ENCODE measurements at regions of chr6 and their contacts with region 1.

Region 1: DNA sequence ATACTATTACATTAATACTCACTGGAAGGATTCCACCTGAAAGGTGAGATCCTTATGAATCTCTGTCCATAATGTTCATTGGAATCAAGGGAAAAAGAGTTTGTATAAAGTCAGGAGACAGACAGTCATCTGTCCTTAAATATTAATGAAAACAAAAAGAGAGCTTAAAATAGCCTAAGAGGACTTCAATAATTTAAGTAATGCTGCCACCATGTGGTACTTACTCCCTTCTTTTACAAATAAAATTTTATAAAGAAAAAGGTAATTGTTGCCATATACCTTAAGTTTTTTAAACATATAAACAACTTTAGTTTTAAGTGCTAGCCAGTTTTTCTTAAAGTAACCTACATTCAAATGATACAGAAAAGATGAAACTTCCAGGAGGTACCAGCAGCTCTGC is 5.1 kb downstream of the BLOC1S5 start:
- DNase-seq: no peak
- H3K4me3 Mint-ChIP-seq: no peak overlapping the region
- H3K27ac Mint-ChIP-seq: no peak overlapping the region
- H3K4me1 Mint-ChIP-seq: peaks cover 8% of the 10 kb centered on the region
- H3K27me3 Mint-ChIP-seq: no peaks in the 10 kb centered on the region

Region 2: DNA sequence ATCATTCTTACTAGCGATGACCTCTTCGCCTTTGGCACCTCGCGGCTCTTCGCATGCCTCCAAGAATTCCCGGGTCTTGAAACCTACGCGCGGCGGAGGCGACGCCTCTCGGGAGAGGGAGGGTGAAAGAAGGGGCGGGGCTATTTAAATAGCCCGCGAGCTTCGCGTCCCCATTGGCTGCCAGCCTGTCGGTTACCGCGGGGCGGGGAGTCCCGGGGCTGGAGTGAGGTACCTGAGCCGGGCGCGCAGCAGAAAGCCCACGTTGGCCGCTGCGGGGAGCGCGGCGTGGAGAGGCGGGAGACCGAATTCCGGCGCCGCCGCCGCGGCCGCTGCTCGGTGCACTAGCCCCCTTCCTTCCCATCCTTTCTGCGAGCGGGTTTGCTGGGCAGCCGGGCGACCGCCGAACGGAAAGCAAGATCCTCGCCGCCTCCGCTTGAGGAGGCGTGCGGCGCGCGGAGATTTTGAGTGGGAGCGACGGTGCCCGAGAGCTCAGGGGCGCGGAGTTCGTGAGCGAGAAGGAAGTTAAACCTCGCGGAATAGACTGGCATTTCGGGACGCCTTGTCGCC is 333.2 kb before region 1 on chr6 and contains the start of gene BMP6:
- CTCF ChIA-PET with region 1: interaction called, 12 read pairs
- DNase-seq: peak; percentile 82
- H3K4me3 Mint-ChIP-seq: peak within 1 kb of the TSS; percentile 72
- H3K27ac Mint-ChIP-seq: peak within 1 kb of the TSS; percentile 58
- H3K4me1 Mint-ChIP-seq: peaks cover 16% of the 10 kb centered on the region
- H3K27me3 Mint-ChIP-seq: peaks cover 91% of the 10 kb centered on the region

Region 3: DNA sequence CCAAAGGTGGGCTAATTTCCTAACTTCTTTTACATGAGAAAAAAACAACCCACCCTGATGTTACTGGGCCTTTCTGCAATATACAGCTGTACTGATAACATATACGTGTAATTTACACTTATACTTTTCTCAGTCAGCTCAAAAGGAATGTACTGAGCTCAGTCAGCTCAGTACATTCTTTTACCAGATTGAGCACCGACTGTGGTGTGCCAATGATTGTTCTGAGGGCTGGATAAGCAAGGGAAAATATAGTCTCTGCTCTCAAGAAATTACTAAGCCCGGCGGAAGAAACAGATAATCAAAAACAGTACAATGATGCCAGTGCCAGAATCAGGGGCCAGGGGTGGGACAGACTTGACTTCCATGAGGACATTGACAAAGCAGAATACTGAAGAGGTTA is 15.1 kb after region 1 on chr6:
- CTCF ChIA-PET with region 1: no interaction called
- DNase-seq: no peak
- H3K4me3 Mint-ChIP-seq: no peak overlapping the region
- H3K27ac Mint-ChIP-seq: no peak overlapping the region
- H3K4me1 Mint-ChIP-seq: peaks cover 12% of the 10 kb centered on the region
- H3K27me3 Mint-ChIP-seq: no peaks in the 10 kb centered on the region

Region 4: DNA sequence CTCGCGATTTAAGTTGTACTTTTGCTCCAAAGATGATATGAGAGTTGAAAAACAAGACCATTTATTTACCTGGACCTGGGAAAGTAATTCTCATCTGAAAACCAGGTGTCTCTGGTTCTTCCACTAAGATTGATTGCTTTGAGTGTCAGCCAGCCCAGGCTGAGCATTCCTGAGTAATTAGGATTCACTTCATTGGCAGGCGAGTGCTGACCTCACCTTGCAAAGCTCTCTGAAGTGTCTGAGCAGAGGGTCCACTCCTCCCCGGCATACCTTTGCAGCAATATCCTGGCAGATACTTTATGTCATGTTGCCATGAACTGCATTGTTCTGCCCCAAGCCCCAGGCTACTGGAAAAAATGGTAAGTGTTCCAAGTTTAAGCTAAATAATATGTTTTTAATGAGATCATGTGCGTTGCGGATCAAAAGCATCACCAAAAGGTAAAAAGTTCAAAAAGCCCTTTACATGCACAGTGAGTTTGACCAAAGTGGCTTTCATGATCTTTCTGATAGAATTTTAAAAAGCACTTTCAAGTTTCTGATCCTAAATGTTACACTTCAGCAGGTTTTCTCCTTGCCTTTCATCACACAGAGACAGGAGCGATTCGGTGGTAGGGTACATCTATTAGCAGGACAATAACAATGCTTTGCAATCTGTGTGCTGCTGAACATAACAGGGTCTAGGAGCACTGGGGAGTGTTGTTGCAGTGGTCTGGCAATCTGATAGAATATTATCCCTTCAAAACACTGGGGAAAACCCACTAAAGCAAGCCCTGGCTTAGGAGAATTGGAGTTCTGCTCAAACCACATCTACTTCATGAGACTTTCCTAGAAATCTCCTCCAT is 171.0 kb after region 1 on chr6:
- CTCF ChIA-PET with region 1: no interaction called
- DNase-seq: no peak
- H3K4me3 Mint-ChIP-seq: no peak overlapping the region
- H3K27ac Mint-ChIP-seq: no peak overlapping the region
- H3K4me1 Mint-ChIP-seq: no peaks in the 10 kb centered on the region
- H3K27me3 Mint-ChIP-seq: no peaks in the 10 kb centered on the region

Measured in activated naive CD4-positive, alpha-beta T cell treated with anti-CD3 and anti-CD28 coated beads, Interleukin-2, amount 10 ng/mL, durations not matched to agents 7 days and 5 days (primary cell).